CD14-positive monocyte (primary cell): ENCODE measurements at regions of chr16 and their contacts with region 1.

Region 1: GRCh38 chr16:8634991-8635736 is 13.7 kb downstream of the METTL22 start:
- DNase-seq: no peak
- H3K4me3 ChIP-seq: no peak overlapping the region
- H3K4me3 Mint-ChIP-seq: no peak overlapping the region
- H3K27ac ChIP-seq: peak overlapping the region; percentile 3 to 66
- H3K27ac Mint-ChIP-seq: peak overlapping the region; percentile 60 to 89 (median 80)
- H3K4me1 ChIP-seq: peaks cover 28 to 41% of the 10 kb centered on the region in 2 donors
- H3K4me1 Mint-ChIP-seq: peaks cover 40% of the 10 kb centered on the region
- H3K27me3 ChIP-seq: no peaks in the 10 kb centered on the region
- H3K27me3 Mint-ChIP-seq: no peaks in the 10 kb centered on the region
- CTCF ChIP-seq: peak; percentile 18

Region 2: DNA sequence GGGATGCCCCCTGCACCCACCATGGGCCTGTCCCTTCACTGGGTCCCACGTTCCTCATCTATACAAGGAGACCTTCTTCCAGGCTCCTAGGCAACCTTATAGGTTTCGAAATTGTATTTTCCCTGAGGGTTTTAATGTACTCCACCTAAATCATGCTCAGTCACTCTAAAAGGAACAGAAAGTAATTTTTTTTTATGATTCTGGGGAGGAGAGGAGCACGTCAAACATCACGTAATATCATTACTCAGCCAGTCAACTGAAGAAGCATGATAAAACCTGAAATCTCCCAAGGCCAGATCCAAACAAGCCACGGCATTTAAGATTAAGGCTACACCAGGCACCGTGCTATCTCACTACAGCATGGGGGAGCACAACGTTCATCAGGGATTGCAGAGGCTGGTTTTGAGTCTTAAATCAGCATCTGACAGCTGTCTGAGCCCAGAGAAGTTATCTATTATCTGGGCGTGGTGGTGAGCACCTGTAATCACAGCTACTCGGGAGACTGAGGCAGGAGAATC is 41.0 kb before region 1 on chr16:
- intact Hi-C with region 1: no loop called
- DNase-seq: peak in 1 of 3 donors; percentile 63
- H3K4me3 ChIP-seq: no peak overlapping the region
- H3K4me3 Mint-ChIP-seq: no peak overlapping the region
- H3K27ac ChIP-seq: no peak overlapping the region
- H3K27ac Mint-ChIP-seq: no peak overlapping the region
- H3K4me1 ChIP-seq: peaks cover 0 to 2% of the 10 kb centered on the region in 2 donors
- H3K4me1 Mint-ChIP-seq: peaks cover 6% of the 10 kb centered on the region
- H3K27me3 ChIP-seq: peaks cover 19 to 26% of the 10 kb centered on the region in 2 donors
- H3K27me3 Mint-ChIP-seq: peaks cover 1 to 10% (median 5%) of the 10 kb centered on the region in 3 donors
- CTCF ChIP-seq: no peak

Region 3: DNA sequence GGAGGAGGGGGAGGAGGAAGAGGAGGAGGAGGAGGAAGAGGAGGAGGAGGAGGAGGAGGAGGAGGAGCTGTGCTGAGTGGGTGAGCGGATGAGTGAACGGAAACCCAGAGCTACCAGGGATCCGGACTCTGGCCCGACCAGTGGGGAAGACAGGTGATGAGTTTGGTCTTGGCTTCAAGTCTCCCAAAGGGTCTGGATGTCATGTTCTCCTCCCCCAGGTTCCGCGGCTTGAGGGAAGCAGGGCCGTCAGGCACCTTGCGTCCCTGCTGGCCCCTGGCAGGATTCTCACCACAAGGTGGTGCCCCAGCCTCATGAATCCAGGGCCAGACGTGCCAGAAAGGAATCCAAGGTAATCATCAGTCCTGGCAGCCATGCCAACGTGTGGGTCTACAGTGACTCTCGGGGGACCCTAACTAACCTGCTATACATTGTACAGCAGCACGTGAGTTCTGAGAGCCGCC is 25.7 kb after region 1 on chr16:
- intact Hi-C with region 1: no loop called
- DNase-seq: peak in 2 of 3 donors; percentile 7 to 40
- H3K4me3 ChIP-seq: no peak overlapping the region
- H3K4me3 Mint-ChIP-seq: no peak overlapping the region
- H3K27ac ChIP-seq: no peak overlapping the region
- H3K27ac Mint-ChIP-seq: no peak overlapping the region
- H3K4me1 ChIP-seq: no peaks in the 10 kb centered on the region
- H3K4me1 Mint-ChIP-seq: no peaks in the 10 kb centered on the region
- H3K27me3 ChIP-seq: no peaks in the 10 kb centered on the region
- H3K27me3 Mint-ChIP-seq: no peaks in the 10 kb centered on the region
- CTCF ChIP-seq: no peak

Region 4: GRCh38 chr16:8674413-8675022 is 39.4 kb after region 1 on chr16 and contains the start of gene ABAT:
- intact Hi-C with region 1: loop called in 1 of 2 experiments (anchors 5 kb)
- DNase-seq: peak; percentile 80 to 85 (median 82)
- H3K4me3 ChIP-seq: peak within 1 kb of the TSS; percentile 35 to 77 (median 48)
- H3K4me3 Mint-ChIP-seq: peak within 1 kb of the TSS; percentile 77 to 90
- H3K27ac ChIP-seq: no peak within 1 kb of the TSS
- H3K27ac Mint-ChIP-seq: peak within 1 kb of the TSS in 5 of 7 donors; percentile 12 to 80 (median 41)
- H3K4me1 ChIP-seq: peaks cover 10 to 14% of the 10 kb centered on the region in 2 donors
- H3K4me1 Mint-ChIP-seq: peaks cover 13% of the 10 kb centered on the region
- H3K27me3 ChIP-seq: peaks cover 0 to 3% of the 10 kb centered on the region in 2 donors
- H3K27me3 Mint-ChIP-seq: peaks cover 4 to 8% (median 5%) of the 10 kb centered on the region in 3 donors
- CTCF ChIP-seq: no peak
- polyA plus RNA-seq, gene ABAT: 4.9 to 11.8 (median 8.7) TPM

Region 5: GRCh38 chr16:8797364-8798173 is 162.4 kb after region 1 on chr16 and contains the starts of genes PMM2 and TMEM186:
- intact Hi-C with region 1: loop called in 1 of 2 experiments (anchors 5 kb)
- DNase-seq: peak; percentile 93 to 96 (median 94)
- H3K4me3 ChIP-seq: peak within 1 kb of the TSS; percentile 65 to 91 (median 71)
- H3K4me3 Mint-ChIP-seq: peak within 1 kb of the TSS; percentile 96 to 98
- H3K27ac ChIP-seq: peak within 1 kb of the TSS; percentile 21 to 89
- H3K27ac Mint-ChIP-seq: peak within 1 kb of the TSS; percentile 81 to 98 (median 90)
- H3K4me1 ChIP-seq: peaks cover 29 to 37% of the 10 kb centered on the region in 2 donors
- H3K4me1 Mint-ChIP-seq: peaks cover 31% of the 10 kb centered on the region
- H3K27me3 ChIP-seq: no peaks in the 10 kb centered on the region
- H3K27me3 Mint-ChIP-seq: peaks cover 0 to 3% (median 0%) of the 10 kb centered on the region in 3 donors
- CTCF ChIP-seq: no peak
- polyA plus RNA-seq, gene PMM2: 15.2 to 22.9 (median 17.8) TPM
- polyA plus RNA-seq, gene TMEM186: 3.8 to 4.5 (median 4.4) TPM

Region 6: GRCh38 chr16:8885674-8886592 is 250.8 kb after region 1 on chr16:
- intact Hi-C with region 1: loop called in 1 of 2 experiments (anchors 10 kb)
- DNase-seq: peak in 1 of 3 donors; percentile 30
- H3K4me3 ChIP-seq: no peak overlapping the region
- H3K4me3 Mint-ChIP-seq: peak overlapping the region in 1 of 2 donors; percentile 7
- H3K27ac ChIP-seq: no peak overlapping the region
- H3K27ac Mint-ChIP-seq: peak overlapping the region in 3 of 7 donors; percentile 14 to 64 (median 47)
- H3K4me1 ChIP-seq: no peaks in the 10 kb centered on the region
- H3K4me1 Mint-ChIP-seq: peaks cover 9% of the 10 kb centered on the region
- H3K27me3 ChIP-seq: peaks cover 0 to 14% of the 10 kb centered on the region in 2 donors
- H3K27me3 Mint-ChIP-seq: peaks cover 21 to 25% (median 24%) of the 10 kb centered on the region in 3 donors
- CTCF ChIP-seq: no peak

Region 7: DNA sequence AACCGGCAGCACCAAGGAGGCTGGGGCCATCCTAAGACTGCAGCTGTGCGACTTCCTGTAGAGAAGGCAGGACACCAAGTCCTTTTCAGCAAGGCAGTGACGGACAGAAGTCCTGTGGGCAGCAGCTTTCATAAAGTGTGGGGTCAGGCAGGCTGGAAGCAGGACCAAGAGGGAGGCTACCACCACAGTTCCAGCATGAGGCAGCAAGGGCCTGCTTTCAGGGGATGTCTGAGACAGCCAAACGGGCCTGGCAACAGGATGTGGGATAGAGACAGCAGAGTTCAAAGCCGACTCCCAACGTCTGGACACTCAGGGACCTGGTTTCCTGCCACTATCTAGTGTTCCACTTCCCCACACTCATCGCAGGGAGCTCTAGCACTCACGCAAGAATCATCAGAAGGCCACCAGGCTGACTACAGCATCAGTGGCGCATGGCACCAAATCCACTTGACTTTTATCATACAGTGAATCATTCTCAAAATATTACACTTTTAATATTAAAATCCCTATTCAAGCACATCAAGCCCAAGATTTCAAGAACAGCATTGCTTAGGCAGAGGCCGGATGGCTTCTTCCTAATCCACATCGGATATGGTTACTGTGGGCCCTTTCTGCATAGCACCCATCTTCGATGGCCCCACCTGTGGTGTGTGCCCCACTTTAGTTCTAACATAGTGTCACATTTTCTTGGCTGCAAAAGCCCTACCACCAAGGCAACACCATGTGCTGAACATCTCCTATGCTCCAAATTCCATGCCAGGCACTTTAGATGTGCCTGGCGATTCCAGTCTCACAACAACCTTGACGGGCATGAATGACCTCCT is 323.4 kb after region 1 on chr16:
- intact Hi-C with region 1: loop called in 1 of 2 experiments (anchors 10 kb)
- DNase-seq: peak; percentile 35 to 46 (median 36)
- H3K4me3 ChIP-seq: peak overlapping the region in 1 of 3 experiments; percentile 94
- H3K4me3 Mint-ChIP-seq: peak overlapping the region; percentile 43 to 60
- H3K27ac ChIP-seq: peak overlapping the region; percentile 57 to 67
- H3K27ac Mint-ChIP-seq: peak overlapping the region; percentile 53 to 84 (median 79)
- H3K4me1 ChIP-seq: peaks cover 71 to 78% of the 10 kb centered on the region in 2 donors
- H3K4me1 Mint-ChIP-seq: peaks cover 73% of the 10 kb centered on the region
- H3K27me3 ChIP-seq: no peaks in the 10 kb centered on the region
- H3K27me3 Mint-ChIP-seq: peaks cover 0 to 2% (median 0%) of the 10 kb centered on the region in 3 donors
- CTCF ChIP-seq: no peak

Region 8: GRCh38 chr16:9123871-9124270 is 488.7 kb after region 1 on chr16:
- intact Hi-C with region 1: loop called in 1 of 2 experiments (anchors 10 kb)
- DNase-seq: peak; percentile 86 to 96 (median 93)
- H3K4me3 ChIP-seq: peak overlapping the region in 1 of 3 experiments; percentile 0
- H3K4me3 Mint-ChIP-seq: peak overlapping the region in 1 of 2 donors; percentile 42
- H3K27ac ChIP-seq: peak overlapping the region; percentile 26 to 73
- H3K27ac Mint-ChIP-seq: peak overlapping the region; percentile 80 to 95 (median 86)
- H3K4me1 ChIP-seq: peaks cover 32 to 44% of the 10 kb centered on the region in 2 donors
- H3K4me1 Mint-ChIP-seq: peaks cover 57% of the 10 kb centered on the region
- H3K27me3 ChIP-seq: no peaks in the 10 kb centered on the region
- H3K27me3 Mint-ChIP-seq: peaks cover 0 to 2% (median 0%) of the 10 kb centered on the region in 3 donors
- CTCF ChIP-seq: no peak